ENCODE measurements at regions of chr5 and their contacts with region 1.

Region 1: GRCh38 chr5:39599721-39600431 is 175.1 kb upstream of the DAB2 start:
- DNase-seq: no peak
- H3K4me3 Mint-ChIP-seq: no peak overlapping the region
- H3K27ac Mint-ChIP-seq: no peak overlapping the region
- H3K4me1 Mint-ChIP-seq: no peaks in the 10 kb centered on the region
- H3K27me3 Mint-ChIP-seq: peaks cover 11% of the 10 kb centered on the region

Region 2: GRCh38 chr5:39691993-39692392 is 92.1 kb after region 1 on chr5:
- CTCF ChIA-PET with region 1: interaction called, 3 read pairs
- intact Hi-C with region 1: loop called (anchors 5 kb)
- DNase-seq: no peak
- H3K4me3 Mint-ChIP-seq: no peak overlapping the region
- H3K27ac Mint-ChIP-seq: no peak overlapping the region
- H3K4me1 Mint-ChIP-seq: no peaks in the 10 kb centered on the region
- H3K27me3 Mint-ChIP-seq: peaks cover 9% of the 10 kb centered on the region